Lower leg skin (tissue), 4 donors: ENCODE measurements at regions of chr11 and their contacts with region 1.

Region 1: DNA sequence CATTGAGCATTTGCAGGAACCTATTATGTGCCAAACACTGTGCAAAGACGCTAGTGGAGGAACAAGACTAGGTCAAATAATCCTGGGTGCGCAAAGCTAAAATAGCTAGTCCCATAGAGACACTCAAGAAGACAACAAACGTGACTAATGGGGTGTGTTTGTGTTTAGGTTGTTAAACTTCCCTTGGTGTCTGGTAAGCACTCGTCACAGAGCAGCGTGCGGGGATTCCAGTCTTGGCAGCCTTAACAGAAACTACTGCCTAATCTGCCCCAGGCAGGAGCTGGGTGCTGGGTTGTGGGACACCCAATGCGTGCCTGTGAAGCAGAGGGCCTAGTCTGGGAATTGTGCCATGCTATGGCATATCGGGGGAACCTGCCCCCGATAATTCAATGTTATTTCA is 10.8 kb upstream of the CALCB start:
- DNase-seq: no peak
- H3K4me3 ChIP-seq: no peak overlapping the region
- CTCF ChIP-seq: no peak
- POLR2A ChIP-seq: no peak

Region 2: GRCh38 chr11:14784230-14784629 is 278.4 kb before region 1 on chr11:
- intact Hi-C with region 1: loop called (anchors 5 kb)
- DNase-seq: no peak
- H3K4me3 ChIP-seq: no peak overlapping the region
- CTCF ChIP-seq: no peak
- POLR2A ChIP-seq: no peak

Region 3: DNA sequence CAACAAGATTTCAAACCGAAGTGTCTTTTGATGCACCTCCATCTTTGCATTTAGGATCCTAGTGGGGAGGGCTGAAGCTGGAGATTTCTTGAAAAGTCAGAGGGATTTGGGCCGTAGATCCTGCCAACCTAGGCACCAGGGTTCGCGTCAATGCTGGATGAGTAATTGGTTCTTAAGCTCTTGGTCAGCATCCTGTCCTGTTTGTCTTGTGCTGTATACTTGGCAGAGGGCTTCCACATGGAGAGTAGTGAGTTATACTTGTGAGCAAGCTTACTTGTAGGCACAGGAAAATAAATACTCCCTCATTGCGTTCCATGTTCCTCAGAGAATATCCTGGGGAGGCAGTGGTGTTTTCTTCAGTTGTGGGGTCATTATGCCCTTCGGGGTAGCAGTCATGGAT is 64.7 kb after region 1 on chr11:
- intact Hi-C with region 1: no loop called
- DNase-seq: no peak
- H3K4me3 ChIP-seq: no peak overlapping the region
- CTCF ChIP-seq: no peak
- POLR2A ChIP-seq: no peak

Region 4: DNA sequence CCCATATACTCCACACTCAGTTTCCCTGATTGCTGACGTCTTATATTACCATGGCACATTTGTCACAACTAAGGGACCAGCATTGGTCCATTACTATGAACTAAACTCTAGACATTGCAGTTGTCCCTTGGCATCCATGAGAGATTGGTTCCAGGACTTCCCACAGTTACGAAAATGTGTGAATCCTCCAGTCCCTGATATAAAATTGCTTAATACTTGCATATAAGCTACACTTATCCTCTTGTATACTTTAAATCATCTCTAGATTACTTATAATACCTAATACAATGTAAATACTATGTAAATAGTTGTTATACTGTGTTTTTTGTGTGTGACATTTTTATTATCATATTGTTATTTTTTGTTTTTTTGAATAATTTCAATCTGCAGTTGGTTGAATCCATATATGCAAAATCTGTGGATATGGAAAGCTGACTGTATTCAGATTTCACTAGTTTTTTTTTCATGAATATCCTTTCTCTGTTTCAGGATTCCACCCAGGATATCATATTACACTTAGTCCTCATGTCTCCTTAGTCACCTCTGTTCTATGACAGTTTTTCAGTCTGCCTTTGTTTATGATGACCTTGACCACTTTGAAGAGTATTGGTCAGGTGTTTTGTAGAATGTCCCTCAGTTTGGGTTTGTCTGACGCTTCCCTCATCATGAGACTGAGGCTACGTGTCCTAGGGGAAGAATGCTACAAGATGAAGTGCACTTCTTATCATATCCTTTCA is 107.4 kb after region 1 on chr11:
- intact Hi-C with region 1: no loop called
- DNase-seq: no peak
- H3K4me3 ChIP-seq: no peak overlapping the region
- CTCF ChIP-seq: no peak
- POLR2A ChIP-seq: no peak